ENCODE measurements at regions of chr3 and their contacts with region 1.

Region 1: GRCh38 chr3:32177702-32178198 is 60.7 kb upstream of the CMTM8 start:
- DNase-seq: peak in 1 of 3 donors; percentile 44
- ATAC-seq: peak; percentile 91 to 94
- H3K4me3 ChIP-seq: no peak overlapping the region
- H3K27ac ChIP-seq: no peak overlapping the region
- H3K4me1 ChIP-seq: peaks cover 2% of the 10 kb centered on the region
- H3K27me3 ChIP-seq: no peaks in the 10 kb centered on the region

Region 2: GRCh38 chr3:32296256-32297204 is 118.8 kb after region 1 on chr3:
- intact Hi-C with region 1: loop called in 1 of 4 experiments (anchors 5 kb)
- DNase-seq: peak; percentile 43 to 71 (median 64)
- ATAC-seq: peak; percentile 72 to 87
- H3K4me3 ChIP-seq: no peak overlapping the region
- H3K27ac ChIP-seq: no peak overlapping the region
- H3K4me1 ChIP-seq: no peaks in the 10 kb centered on the region
- H3K27me3 ChIP-seq: no peaks in the 10 kb centered on the region

Region 3: GRCh38 chr3:32334675-32335074 is 156.9 kb after region 1 on chr3:
- intact Hi-C with region 1: loop called in 1 of 4 experiments (anchors 5 kb)
- DNase-seq: no peak
- ATAC-seq: no peak
- H3K4me3 ChIP-seq: no peak overlapping the region
- H3K27ac ChIP-seq: no peak overlapping the region
- H3K4me1 ChIP-seq: peaks cover 3% of the 10 kb centered on the region
- H3K27me3 ChIP-seq: no peaks in the 10 kb centered on the region

Region 4: GRCh38 chr3:32354362-32354778 is 176.6 kb after region 1 on chr3:
- intact Hi-C with region 1: loop called in 2 of 4 experiments (anchors 10 kb)
- DNase-seq: no peak
- ATAC-seq: peak in 1 of 2 donors; percentile 42
- H3K4me3 ChIP-seq: no peak overlapping the region
- H3K27ac ChIP-seq: no peak overlapping the region
- H3K4me1 ChIP-seq: no peaks in the 10 kb centered on the region
- H3K27me3 ChIP-seq: no peaks in the 10 kb centered on the region